Common myeloid progenitor, CD34-positive (primary cell): ENCODE measurements at regions of chr14 and their contacts with region 1.

Region 1: GRCh38 chr14:72904840-72905561 is 11.1 kb upstream of the DPF3 start:
- DNase-seq: peak; percentile 68 to 82 (median 80)
- H3K4me3 ChIP-seq: no peak overlapping the region
- H3K27ac ChIP-seq: no peak overlapping the region
- H3K4me1 ChIP-seq: no peaks in the 10 kb centered on the region
- H3K27me3 ChIP-seq: peaks cover 0 to 51% (median 14%) of the 10 kb centered on the region in 5 experiments

Region 2: GRCh38 chr14:72503696-72504368 is 401.2 kb before region 1 on chr14:
- CTCF ChIA-PET with region 1: interaction called, 19 read pairs
- POLR2A ChIA-PET with region 1: no interaction called
- DNase-seq: no peak
- H3K4me3 ChIP-seq: no peak overlapping the region
- H3K27ac ChIP-seq: no peak overlapping the region
- H3K4me1 ChIP-seq: peaks cover 0 to 6% (median 0%) of the 10 kb centered on the region in 4 experiments
- H3K27me3 ChIP-seq: peaks cover 0 to 2% (median 0%) of the 10 kb centered on the region in 5 experiments

Region 3: DNA sequence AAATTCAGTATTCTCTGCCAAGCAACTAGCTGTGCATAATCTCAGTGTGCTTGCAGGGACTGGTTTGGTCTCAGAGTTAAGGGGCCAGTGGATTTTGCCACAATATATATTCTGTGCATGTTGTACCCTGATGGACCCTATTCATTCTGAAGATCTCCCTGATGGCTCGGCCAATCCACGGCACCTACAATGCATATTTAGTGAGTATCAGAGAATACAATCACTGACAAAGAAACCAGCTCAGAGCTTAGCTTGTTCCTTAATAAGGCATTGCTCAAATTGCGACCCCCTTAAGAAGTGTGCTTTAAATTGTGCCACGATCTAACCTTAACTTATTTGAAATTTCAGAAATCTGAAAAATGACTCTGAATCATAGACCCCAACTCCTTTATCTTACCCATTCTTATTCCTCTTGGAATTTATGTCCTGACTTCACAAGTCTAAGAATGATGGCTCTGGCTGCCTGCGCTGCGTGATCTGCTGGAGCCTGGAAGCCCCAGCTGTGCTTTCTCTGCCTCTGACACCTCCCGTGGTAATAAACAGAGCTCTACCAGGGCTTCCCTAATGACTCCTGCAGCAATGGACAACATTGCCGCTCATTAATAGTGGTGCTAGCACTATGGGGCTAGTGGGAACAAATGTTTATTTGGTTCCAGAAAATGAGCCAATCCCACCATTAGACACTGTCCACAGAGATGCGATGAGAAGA is 12.2 kb after region 1 on chr14:
- CTCF ChIA-PET with region 1: interaction called, 10 read pairs
- POLR2A ChIA-PET with region 1: no interaction called
- DNase-seq: no peak
- H3K4me3 ChIP-seq: no peak overlapping the region
- H3K27ac ChIP-seq: no peak overlapping the region
- H3K4me1 ChIP-seq: peaks cover 0 to 9% (median 2%) of the 10 kb centered on the region in 4 experiments
- H3K27me3 ChIP-seq: peaks cover 2 to 18% (median 7%) of the 10 kb centered on the region in 5 experiments